OCI-LY7 (cell line): ENCODE measurements at regions of chr1 and their contacts with region 1.

Region 1: GRCh38 chr1:84936116-84936810 is 43.3 kb upstream of the LPAR3 start:
- DNase-seq: peak; percentile 62
- H3K4me3 ChIP-seq: no peak overlapping the region
- H3K27ac ChIP-seq: no peak overlapping the region
- H3K4me1 ChIP-seq: no peaks in the 10 kb centered on the region
- CTCF ChIP-seq: peak; percentile 98

Region 2: GRCh38 chr1:84665703-84666317 is 270.5 kb before region 1 on chr1:
- CTCF ChIA-PET with region 1: no interaction called
- POLR2A ChIA-PET with region 1: no interaction called
- intact Hi-C with region 1: no loop called
- DNase-seq: no peak
- H3K4me3 ChIP-seq: no peak overlapping the region
- H3K27ac ChIP-seq: no peak overlapping the region
- H3K4me1 ChIP-seq: no peaks in the 10 kb centered on the region
- CTCF ChIP-seq: no peak

Region 3: DNA sequence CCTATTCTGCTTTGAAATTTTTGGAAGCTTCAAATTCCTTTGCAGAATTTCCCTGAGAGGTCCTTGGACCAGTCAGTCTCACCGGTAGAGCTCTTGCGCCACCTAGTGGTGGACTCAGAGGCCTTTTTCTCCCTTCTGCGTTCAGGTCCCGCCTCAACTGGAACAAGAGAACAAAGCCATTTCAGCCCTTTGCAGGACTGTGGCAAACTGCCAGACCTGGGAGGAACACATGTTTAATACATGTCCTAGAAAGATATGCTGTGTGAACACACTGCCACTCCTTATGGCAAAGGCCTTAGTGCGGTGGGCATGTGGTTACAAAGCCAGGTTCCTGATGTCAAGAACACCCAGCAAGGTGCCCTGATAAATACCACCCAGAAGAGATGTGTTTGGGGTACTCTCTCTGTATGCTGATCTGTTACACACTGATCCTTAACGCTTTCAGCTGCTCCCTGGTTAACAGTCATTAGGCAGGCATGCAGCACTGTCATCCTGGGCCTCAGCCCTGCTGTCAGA is 163.8 kb before region 1 on chr1:
- CTCF ChIA-PET with region 1: no interaction called
- POLR2A ChIA-PET with region 1: no interaction called
- intact Hi-C with region 1: loop called (anchors 5 kb)
- DNase-seq: peak; percentile 65
- H3K4me3 ChIP-seq: no peak overlapping the region
- H3K27ac ChIP-seq: no peak overlapping the region
- H3K4me1 ChIP-seq: no peaks in the 10 kb centered on the region
- CTCF ChIP-seq: peak; percentile 95